Lower leg skin (tissue), 4 donors: ENCODE measurements at regions of chr11 and their contacts with region 1.

Region 1: GRCh38 chr11:57815476-57815875 is 53.9 kb downstream of the CTNND1 start:
- DNase-seq: no peak
- H3K4me3 ChIP-seq: no peak overlapping the region
- CTCF ChIP-seq: no peak
- POLR2A ChIP-seq: no peak

Region 2: GRCh38 chr11:57920971-57921370 is 105.5 kb after region 1 on chr11:
- intact Hi-C with region 1: no loop called
- DNase-seq: no peak
- H3K4me3 ChIP-seq: no peak overlapping the region
- CTCF ChIP-seq: no peak
- POLR2A ChIP-seq: no peak

Region 3: GRCh38 chr11:58059007-58059350 is 243.5 kb after region 1 on chr11:
- intact Hi-C with region 1: loop called (anchors 10 kb)
- DNase-seq: no peak
- H3K4me3 ChIP-seq: no peak overlapping the region
- CTCF ChIP-seq: no peak
- POLR2A ChIP-seq: no peak

Region 4: GRCh38 chr11:58152781-58153180 is 337.3 kb after region 1 on chr11:
- intact Hi-C with region 1: no loop called
- DNase-seq: no peak
- H3K4me3 ChIP-seq: no peak overlapping the region
- CTCF ChIP-seq: no peak
- POLR2A ChIP-seq: no peak